CD8-positive, alpha-beta memory T cell (primary cell): ENCODE measurements at regions of chr1 and their contacts with region 1.

Region 1: GRCh38 chr1:46340404-46341221 is at the start of gene NSUN4:
- DNase-seq: peak; percentile 81 to 88 (median 84)
- H3K4me3 ChIP-seq: peak within 1 kb of the TSS; percentile 98
- H3K4me3 Mint-ChIP-seq: peak within 1 kb of the TSS; percentile 95 to 100 (median 99)
- H3K27ac ChIP-seq: peak within 1 kb of the TSS; percentile 97
- H3K27ac Mint-ChIP-seq: peak within 1 kb of the TSS; percentile 98 to 100 (median 99)
- H3K4me1 ChIP-seq: peaks cover 14% of the 10 kb centered on the region
- H3K4me1 Mint-ChIP-seq: peaks cover 36 to 46% (median 44%) of the 10 kb centered on the region in 3 donors
- H3K27me3 ChIP-seq: no peaks in the 10 kb centered on the region
- H3K27me3 Mint-ChIP-seq: no peaks in the 10 kb centered on the region
- total RNA-seq, gene NSUN4: 29.5 to 32.4 TPM

Region 2: GRCh38 chr1:46247436-46248121 is 93.0 kb before region 1 on chr1 and contains the start of gene RAD54L:
- CTCF ChIA-PET with region 1: interaction called, 31 read pairs
- POLR2A ChIA-PET with region 1: no interaction called
- DNase-seq: peak; percentile 93 to 98 (median 94)
- H3K4me3 ChIP-seq: peak within 1 kb of the TSS; percentile 95
- H3K4me3 Mint-ChIP-seq: peak within 1 kb of the TSS; percentile 87 to 97 (median 93)
- H3K27ac ChIP-seq: peak within 1 kb of the TSS; percentile 74
- H3K27ac Mint-ChIP-seq: peak within 1 kb of the TSS; percentile 74 to 93 (median 84)
- H3K4me1 ChIP-seq: peaks cover 9% of the 10 kb centered on the region
- H3K4me1 Mint-ChIP-seq: peaks cover 13 to 20% (median 17%) of the 10 kb centered on the region in 3 donors
- H3K27me3 ChIP-seq: no peaks in the 10 kb centered on the region
- H3K27me3 Mint-ChIP-seq: no peaks in the 10 kb centered on the region
- total RNA-seq, gene RAD54L: 50.7 to 53.7 TPM

Region 3: GRCh38 chr1:46303038-46303871 is 37.4 kb before region 1 on chr1 and contains the starts of genes LRRC41 and UQCRH:
- CTCF ChIA-PET with region 1: interaction called, 21 read pairs
- POLR2A ChIA-PET with region 1: interaction called, 12 read pairs
- DNase-seq: peak; percentile 87 to 94 (median 92)
- H3K4me3 ChIP-seq: peak within 1 kb of the TSS; percentile 94
- H3K4me3 Mint-ChIP-seq: peak within 1 kb of the TSS; percentile 94 to 99 (median 98)
- H3K27ac ChIP-seq: peak within 1 kb of the TSS; percentile 91
- H3K27ac Mint-ChIP-seq: peak within 1 kb of the TSS; percentile 97 to 100 (median 97)
- H3K4me1 ChIP-seq: peaks cover 44% of the 10 kb centered on the region
- H3K4me1 Mint-ChIP-seq: peaks cover 41 to 73% (median 51%) of the 10 kb centered on the region in 3 donors
- H3K27me3 ChIP-seq: no peaks in the 10 kb centered on the region
- H3K27me3 Mint-ChIP-seq: no peaks in the 10 kb centered on the region
- total RNA-seq, gene LRRC41: 40.3 to 41.3 TPM
- total RNA-seq, gene UQCRH: 371 to 394 TPM

Region 4: GRCh38 chr1:46495778-46496177 is 155.2 kb after region 1 on chr1:
- CTCF ChIA-PET with region 1: no interaction called
- POLR2A ChIA-PET with region 1: no interaction called
- DNase-seq: no peak
- H3K4me3 ChIP-seq: no peak overlapping the region
- H3K4me3 Mint-ChIP-seq: no peak overlapping the region
- H3K27ac ChIP-seq: no peak overlapping the region
- H3K27ac Mint-ChIP-seq: no peak overlapping the region
- H3K4me1 ChIP-seq: no peaks in the 10 kb centered on the region
- H3K4me1 Mint-ChIP-seq: peaks cover 0 to 5% (median 3%) of the 10 kb centered on the region in 3 donors
- H3K27me3 ChIP-seq: peaks cover 18% of the 10 kb centered on the region
- H3K27me3 Mint-ChIP-seq: peaks cover 45 to 64% of the 10 kb centered on the region in 2 donors